PC-3 (cell line): ENCODE measurements at regions of chr14 and their contacts with region 1.

Region 1: DNA sequence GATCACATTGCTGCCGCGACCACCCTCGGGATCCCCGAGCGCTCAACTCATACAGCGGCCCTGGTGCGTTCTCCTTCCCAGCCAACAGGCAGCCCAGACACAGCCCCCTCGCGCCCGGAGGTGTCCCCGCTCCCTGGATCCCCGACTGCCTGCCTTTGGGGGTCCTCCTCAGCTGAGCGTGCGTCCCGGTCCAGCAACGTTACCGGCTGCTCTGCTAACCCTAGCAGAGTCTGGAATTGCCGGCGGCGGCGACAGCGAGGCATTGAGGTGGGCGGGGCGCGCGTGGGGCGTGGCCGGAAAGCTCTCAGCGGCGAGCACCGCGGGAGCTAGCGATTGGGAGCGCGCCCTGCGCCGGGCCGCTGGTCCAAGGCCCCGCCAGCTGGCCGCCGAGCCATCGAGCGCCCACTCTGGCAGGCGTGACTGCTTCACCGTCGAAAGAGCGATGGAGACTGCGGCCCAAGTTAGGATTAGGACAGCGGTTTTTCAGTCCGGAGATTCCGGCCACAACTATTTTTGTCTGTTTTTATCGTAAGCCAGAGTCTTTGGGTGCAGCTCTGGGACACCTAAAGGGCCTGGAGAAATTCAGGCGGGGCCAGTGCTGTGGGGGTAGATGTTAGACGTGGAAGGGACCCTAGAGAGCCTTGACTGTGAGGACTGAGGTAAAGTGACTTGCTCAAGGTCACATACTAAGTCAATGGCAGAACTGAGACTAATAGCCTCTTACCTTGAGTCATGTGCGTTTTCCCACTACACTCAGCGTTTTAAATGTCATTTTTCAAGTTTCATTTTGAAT is at the start of gene HEATR5A:
- DNase-seq: peak; percentile 97
- ATAC-seq: peak; percentile 92
- H3K4me3 ChIP-seq: peak within 1 kb of the TSS; percentile 91
- H3K27ac ChIP-seq: peak within 1 kb of the TSS; percentile 39
- H3K4me1 ChIP-seq: peaks cover 13% of the 10 kb centered on the region
- H3K27me3 ChIP-seq: no peaks in the 10 kb centered on the region
- CTCF ChIP-seq: 0 out of 2 replicates have a peak, but pooled peaks have one; percentile 21
- total RNA-seq, gene HEATR5A: 11.5 and 12.7 TPM in 2 replicates

Region 2: GRCh38 chr14:31402764-31403439 is 17.6 kb before region 1 on chr14:
- CTCF ChIA-PET with region 1: no interaction called
- POLR2A ChIA-PET with region 1: interaction called, 20 read pairs
- intact Hi-C with region 1: no loop called
- DNase-seq: no peak
- ATAC-seq: no peak
- H3K4me3 ChIP-seq: no peak overlapping the region
- H3K27ac ChIP-seq: no peak overlapping the region
- H3K4me1 ChIP-seq: no peaks in the 10 kb centered on the region
- H3K27me3 ChIP-seq: no peaks in the 10 kb centered on the region
- CTCF ChIP-seq: no peak

Region 3: GRCh38 chr14:31441271-31442110 is 21.0 kb after region 1 on chr14:
- CTCF ChIA-PET with region 1: interaction called, 4 read pairs
- POLR2A ChIA-PET with region 1: interaction called, 16 read pairs
- intact Hi-C with region 1: no loop called
- DNase-seq: peak; percentile 22
- ATAC-seq: peak; percentile 93
- H3K4me3 ChIP-seq: no peak overlapping the region
- H3K27ac ChIP-seq: no peak overlapping the region; the same call in 1 of the 2 replicates
- H3K4me1 ChIP-seq: peaks cover 11% of the 10 kb centered on the region; the same call in 1 of the 2 replicates
- H3K27me3 ChIP-seq: no peaks in the 10 kb centered on the region
- CTCF ChIP-seq: no peak

Region 4: DNA sequence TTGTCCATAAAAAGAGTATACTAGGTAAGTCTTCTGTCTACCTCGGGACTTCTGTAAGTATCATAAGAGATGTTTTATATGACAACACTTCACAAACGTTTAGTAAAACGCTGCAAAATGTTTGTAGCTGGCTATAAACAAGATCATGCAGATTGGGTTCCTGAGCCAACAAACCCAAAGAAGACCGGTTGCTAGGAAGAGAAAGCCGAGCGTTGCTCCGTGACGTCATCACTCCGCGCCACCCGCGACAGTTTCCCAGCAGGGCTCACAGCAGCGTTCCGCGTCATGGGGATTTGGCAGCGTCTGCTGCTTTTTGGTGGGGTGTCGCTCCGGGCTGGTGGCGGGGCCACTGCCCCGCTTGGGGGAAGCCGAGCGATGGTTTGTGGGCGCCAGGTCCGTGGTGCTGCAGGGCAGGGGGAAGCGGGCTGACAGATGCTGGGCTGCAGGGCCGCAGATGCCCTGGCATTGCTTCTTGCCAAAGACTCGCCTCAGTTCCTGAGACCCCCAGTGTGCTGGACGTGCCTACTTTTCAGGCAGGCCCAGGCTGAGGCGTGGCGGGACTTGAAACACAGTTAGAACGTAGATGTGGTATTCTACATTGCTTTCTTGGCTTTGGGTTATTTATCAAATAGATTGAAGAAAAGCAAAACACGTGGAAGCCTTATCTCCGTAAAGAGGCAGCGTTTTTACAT is 140.8 kb after region 1 on chr14 and contains the start of gene NUBPL:
- CTCF ChIA-PET with region 1: no interaction called
- POLR2A ChIA-PET with region 1: no interaction called
- intact Hi-C with region 1: no loop called
- DNase-seq: peak; percentile 97
- ATAC-seq: peak; percentile 86
- H3K4me3 ChIP-seq: peak within 1 kb of the TSS; percentile 76
- H3K27ac ChIP-seq: peak within 1 kb of the TSS; percentile 4; the same call in 1 of the 2 replicates
- H3K4me1 ChIP-seq: peaks cover 17% of the 10 kb centered on the region; the same call in 1 of the 2 replicates
- H3K27me3 ChIP-seq: no peaks in the 10 kb centered on the region
- CTCF ChIP-seq: no peak
- total RNA-seq, gene NUBPL: 9.0 and 14.9 TPM in 2 replicates